ENCODE measurements at regions of chr5 and their contacts with region 1.

Region 1: DNA sequence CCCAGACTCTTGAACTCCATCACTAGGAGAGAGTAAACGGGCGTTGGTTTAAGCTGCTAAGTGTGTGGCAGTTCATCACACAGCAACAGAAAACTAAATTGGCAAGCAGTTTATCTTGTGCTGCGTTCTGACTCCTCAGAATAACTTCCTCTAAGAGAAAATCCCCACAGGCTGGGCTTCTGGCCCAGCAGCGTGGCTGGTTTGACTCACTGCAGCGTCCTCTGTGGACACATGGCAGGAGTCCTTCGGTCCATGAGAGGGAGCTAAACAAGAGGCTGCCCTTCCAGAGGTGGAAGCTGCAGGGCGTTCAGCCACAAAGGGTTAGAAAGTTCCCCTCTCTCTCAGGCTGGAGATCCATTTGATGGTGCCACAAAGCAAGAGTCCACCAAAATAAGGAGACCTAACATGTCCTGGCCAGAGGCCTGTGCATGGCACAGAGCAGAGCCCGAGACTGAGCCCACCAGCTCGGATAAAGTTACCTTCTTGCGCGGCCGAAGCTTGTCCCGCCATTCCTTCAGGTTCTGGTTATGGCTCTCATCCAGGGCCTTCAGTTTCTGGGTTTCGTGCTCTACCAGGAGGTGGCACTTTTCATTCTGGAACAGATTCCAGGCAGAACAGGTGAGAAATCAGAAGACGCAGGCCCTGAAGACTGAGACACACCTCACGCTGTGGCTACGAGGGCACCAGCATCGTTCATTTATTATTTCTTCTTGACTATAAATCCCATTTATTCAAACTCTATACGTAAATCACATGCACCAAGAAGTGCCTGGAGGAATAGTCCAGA is 46.2 kb upstream of the FBXW11 start:
- DNase-seq: peak; percentile 87
- ATAC-seq: peak; percentile 94

Region 2: DNA sequence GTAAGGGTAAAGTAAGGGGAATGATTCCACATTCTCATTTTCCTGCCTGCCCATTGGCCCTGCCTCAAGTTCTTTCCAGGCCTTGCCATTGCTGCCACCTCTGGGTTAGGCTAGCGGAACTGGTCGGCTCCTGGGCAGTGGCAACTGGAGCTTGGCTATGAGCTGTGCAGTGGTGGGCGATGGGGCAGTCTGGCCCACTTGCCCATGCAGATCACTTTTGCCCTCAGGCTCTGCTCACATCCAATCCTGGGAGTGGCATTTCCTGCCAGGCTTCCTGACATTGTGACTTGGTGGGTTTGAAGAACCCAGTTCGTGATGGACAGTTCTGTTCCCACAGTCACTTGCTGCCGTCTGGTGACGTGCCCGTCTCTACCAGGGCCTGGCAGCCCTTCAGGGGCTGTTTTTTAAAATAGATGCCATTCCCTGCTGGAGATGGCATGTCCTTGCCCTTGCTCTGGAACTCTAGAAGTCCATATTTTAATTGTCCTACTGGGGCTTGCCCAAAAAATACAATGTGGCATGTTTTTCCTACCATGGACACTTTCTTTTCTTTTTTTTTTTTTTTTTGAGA is 547.1 kb before region 1 on chr5:
- intact Hi-C with region 1: no loop called
- DNase-seq: peak; percentile 50
- ATAC-seq: peak; percentile 16

Region 3: DNA sequence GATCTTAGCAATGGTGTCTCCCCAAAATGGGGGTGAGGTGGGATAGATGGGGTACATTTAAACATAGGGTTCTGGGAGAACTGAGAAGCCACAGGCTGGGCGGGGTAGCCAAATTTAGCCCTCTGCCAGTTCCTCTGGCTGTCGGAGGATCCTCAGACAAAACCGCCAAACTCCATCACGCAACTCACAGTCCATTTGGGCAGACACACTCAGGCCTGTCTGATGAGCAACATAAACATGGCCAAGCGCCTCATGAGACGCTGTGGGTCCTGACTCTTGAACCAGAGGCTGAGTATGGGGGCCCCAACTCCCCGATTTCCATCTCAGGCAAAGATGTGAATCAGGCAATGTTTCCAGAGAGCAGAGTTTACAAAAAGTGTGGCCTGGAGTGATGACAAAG is 470.9 kb before region 1 on chr5:
- intact Hi-C with region 1: no loop called
- DNase-seq: no peak
- ATAC-seq: no peak

Region 4: GRCh38 chr5:171757853-171758535 is 294.6 kb before region 1 on chr5:
- intact Hi-C with region 1: no loop called
- DNase-seq: no peak
- ATAC-seq: no peak

Region 5: GRCh38 chr5:171984748-171985419 is 67.8 kb before region 1 on chr5:
- intact Hi-C with region 1: no loop called
- DNase-seq: no peak
- ATAC-seq: no peak

Region 6: GRCh38 chr5:172006321-172007174 is 46.1 kb before region 1 on chr5 and contains the start of gene FBXW11:
- intact Hi-C with region 1: loop called (anchors 5 kb)
- DNase-seq: peak; percentile 98
- ATAC-seq: peak; percentile 96
- total RNA-seq, gene FBXW11: 63.0 TPM